Activated T-helper 2 cell treated with anti-CD3 and anti-CD28 coated beads, Interferon-gamma antibody, Interleukin-2, Interleukin-4, amounts not matched to agents 10 μg/mL and 5 μg/mL and 100 μg/mL, durations not matched to agents 14 hours and 24 hours and 36 hours (primary cell): ENCODE measurements at regions of chr22 and their contacts with region 1.

Region 1: DNA sequence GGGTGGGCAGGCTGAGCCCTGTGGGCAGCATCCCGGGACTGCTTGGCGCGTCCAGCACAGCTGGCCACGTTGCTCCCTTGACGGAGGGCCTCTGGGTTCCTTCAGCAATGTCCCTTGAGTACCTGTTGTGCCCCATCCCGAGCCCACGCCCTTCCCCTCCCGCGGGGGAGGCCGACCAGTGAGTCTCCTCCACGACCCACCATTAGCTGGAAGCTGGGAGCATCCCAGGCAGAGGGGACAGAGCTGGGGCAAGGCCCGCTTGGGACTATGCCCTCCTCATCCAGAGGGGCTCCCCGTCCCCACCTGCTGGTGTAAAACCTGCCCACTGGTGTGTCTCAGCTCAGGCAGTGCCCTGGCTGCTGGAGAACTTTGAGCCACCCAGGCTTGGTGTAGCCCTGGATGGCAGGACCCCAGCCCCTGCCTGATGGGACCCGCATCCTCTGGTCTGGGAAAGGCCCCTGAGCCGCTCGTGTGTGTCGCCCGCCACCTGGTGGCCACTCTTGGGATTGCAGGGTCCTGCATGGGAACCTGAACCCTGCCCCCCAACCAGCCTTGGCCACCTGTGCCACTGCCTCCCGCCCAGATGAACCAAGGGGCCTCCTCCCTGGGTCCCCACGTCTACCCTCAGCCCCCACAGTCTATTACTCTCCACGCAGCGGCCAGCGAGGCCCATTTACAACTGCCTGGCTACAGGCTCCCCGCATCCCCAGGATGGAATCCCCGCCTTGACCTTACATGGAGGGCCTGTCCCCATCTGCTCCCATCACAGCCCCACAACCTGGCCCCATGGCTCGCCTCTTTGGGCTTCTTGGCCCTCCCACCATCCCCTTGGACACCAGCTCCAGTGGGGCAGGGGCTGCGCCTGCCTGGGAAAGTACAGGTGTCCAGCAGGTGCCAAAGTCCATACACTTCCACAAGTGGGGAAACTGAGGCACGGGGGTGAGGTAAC is 16.6 kb upstream of the ARHGAP8 start:
- DNase-seq: peak; percentile 65
- H3K4me3 Mint-ChIP-seq: no peak overlapping the region
- H3K27ac Mint-ChIP-seq: no peak overlapping the region
- H3K4me1 Mint-ChIP-seq: no peaks in the 10 kb centered on the region
- H3K27me3 Mint-ChIP-seq: no peaks in the 10 kb centered on the region

Region 2: GRCh38 chr22:44697423-44698141 is 38.2 kb before region 1 on chr22:
- intact Hi-C with region 1: loop called (anchors 1 kb)
- DNase-seq: peak; percentile 70
- H3K4me3 Mint-ChIP-seq: no peak overlapping the region
- H3K27ac Mint-ChIP-seq: no peak overlapping the region
- H3K4me1 Mint-ChIP-seq: peaks cover 3% of the 10 kb centered on the region
- H3K27me3 Mint-ChIP-seq: no peaks in the 10 kb centered on the region

Region 3: GRCh38 chr22:44776605-44777337 is 41.0 kb after region 1 on chr22:
- intact Hi-C with region 1: no loop called
- DNase-seq: no peak
- H3K4me3 Mint-ChIP-seq: no peak overlapping the region
- H3K27ac Mint-ChIP-seq: no peak overlapping the region
- H3K4me1 Mint-ChIP-seq: no peaks in the 10 kb centered on the region
- H3K27me3 Mint-ChIP-seq: no peaks in the 10 kb centered on the region